PC-9 (cell line): ENCODE measurements at regions of chr15 and their contacts with region 1.

Region 1: GRCh38 chr15:69452692-69453521 is at the start of gene RPLP1:
- DNase-seq: peak; percentile 70 to 93
- H3K4me3 ChIP-seq: peak within 1 kb of the TSS; percentile 71
- H3K27ac ChIP-seq: peak within 1 kb of the TSS; percentile 82
- H3K4me1 ChIP-seq: peaks cover 25% of the 10 kb centered on the region
- H3K27me3 ChIP-seq: no peaks in the 10 kb centered on the region
- CTCF ChIP-seq: no peak
- total RNA-seq, gene RPLP1: 1,651 and 3,001 TPM in 2 replicates

Region 2: GRCh38 chr15:69045808-69046207 is 407.1 kb before region 1 on chr15:
- CTCF ChIA-PET with region 1: interaction called, 3 read pairs
- POLR2A ChIA-PET with region 1: interaction called, 13 read pairs
- intact Hi-C with region 1: no loop called
- DNase-seq: peak in 1 of 2 experiments; percentile 39
- H3K4me3 ChIP-seq: no peak overlapping the region
- H3K27ac ChIP-seq: peak overlapping the region; percentile 97
- H3K4me1 ChIP-seq: peaks cover 54% of the 10 kb centered on the region
- H3K27me3 ChIP-seq: no peaks in the 10 kb centered on the region
- CTCF ChIP-seq: no peak; the same call in 1 of the 2 replicates

Region 3: DNA sequence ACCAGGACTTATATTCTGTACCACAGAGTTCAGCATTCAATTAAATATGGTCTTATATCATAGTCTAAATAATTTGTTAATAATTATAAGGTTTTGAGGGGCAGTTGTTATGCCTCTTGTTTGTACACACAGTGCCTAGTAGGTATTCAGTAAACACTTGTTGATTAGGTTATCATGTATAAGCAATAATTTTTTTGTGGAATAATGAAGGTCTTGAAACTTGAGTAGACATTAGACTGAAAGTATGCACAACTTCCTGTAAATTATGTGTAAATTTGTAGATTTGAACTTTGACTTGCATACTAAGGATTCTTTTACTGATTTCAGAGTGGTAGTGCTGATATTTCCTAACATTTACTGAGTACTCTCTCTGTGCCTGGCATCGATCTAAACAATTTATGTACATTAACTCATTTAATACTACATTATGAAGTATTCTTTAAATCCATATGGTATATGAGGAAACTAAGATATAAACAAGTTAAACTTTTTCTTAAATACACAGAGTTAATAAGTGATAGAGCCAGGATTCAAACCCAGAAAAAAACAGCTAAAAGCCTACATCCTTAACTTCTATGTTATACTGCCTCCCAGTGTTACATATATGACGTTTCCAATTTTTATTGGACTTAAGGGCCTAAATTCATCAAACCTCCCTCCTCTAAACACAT is 227.4 kb before region 1 on chr15:
- CTCF ChIA-PET with region 1: no interaction called
- POLR2A ChIA-PET with region 1: interaction called, 19 read pairs
- intact Hi-C with region 1: no loop called
- DNase-seq: peak in 1 of 2 experiments; percentile 35
- H3K4me3 ChIP-seq: no peak overlapping the region
- H3K27ac ChIP-seq: no peak overlapping the region
- H3K4me1 ChIP-seq: peaks cover 16% of the 10 kb centered on the region
- H3K27me3 ChIP-seq: no peaks in the 10 kb centered on the region
- CTCF ChIP-seq: peak; percentile 49; the same call in 1 of the 2 replicates